ENCODE measurements at regions of chr12 and their contacts with region 1.

Region 1: DNA sequence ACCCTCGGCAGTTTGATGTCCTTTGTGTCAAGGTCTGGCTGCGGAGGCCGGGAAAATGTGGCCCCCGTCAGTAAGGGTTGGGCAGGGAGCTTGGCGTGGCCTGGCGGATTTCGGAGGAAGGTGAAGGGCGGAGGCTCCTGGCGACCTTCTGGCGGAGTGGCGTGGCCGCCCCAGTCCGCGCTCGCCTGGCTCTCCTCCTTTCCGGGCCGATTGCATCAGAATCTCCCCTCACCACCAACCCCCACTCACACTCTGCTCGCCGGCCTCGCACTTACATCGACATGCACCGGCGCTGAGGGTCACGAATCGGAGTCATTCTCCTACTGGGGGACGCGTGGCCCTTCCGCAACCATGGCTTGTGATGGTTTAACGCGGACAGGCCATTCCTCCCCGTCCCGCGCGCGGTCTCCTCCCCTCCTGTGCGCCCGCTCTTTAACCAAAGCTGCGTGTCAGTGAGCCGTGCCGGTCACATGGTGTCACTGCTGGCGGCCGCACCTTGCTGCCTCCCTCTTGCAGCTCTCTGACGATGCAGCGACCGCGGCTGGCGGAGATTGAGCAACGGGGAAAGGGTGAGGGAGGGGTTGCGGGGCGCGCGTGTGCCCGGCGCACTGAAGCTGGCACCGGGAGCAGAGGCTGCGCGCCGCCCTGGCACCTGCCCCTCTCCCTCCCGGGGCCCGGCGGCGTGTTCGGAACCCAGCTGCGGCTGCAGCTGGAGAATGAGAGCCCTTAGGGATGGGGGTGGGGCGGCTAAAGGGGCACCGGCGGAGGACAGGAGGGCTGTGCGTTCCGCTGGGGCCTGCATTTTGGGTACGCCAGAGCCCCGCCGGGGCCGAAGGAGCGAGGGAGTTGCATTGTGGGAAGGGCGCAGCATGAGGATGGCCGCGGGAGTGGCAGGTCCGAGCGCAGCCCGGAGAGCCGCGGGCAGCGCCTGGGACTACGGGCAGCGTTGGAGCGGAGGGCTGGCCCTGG is at the start of gene SLC38A1:
- DNase-seq: peak; percentile 94
- ATAC-seq: peak; percentile 72
- H3K4me3 Mint-ChIP-seq: no peak within 1 kb of the TSS
- H3K27ac Mint-ChIP-seq: no peak within 1 kb of the TSS
- H3K4me1 Mint-ChIP-seq: peaks cover 21% of the 10 kb centered on the region
- H3K27me3 Mint-ChIP-seq: no peaks in the 10 kb centered on the region
- total RNA-seq, gene SLC38A1: 149 to 180 TPM

Region 2: GRCh38 chr12:46209914-46210872 is 58.7 kb before region 1 on chr12:
- CTCF ChIA-PET with region 1: interaction called, 34 read pairs
- DNase-seq: peak; percentile 58
- ATAC-seq: peak; percentile 21
- H3K4me3 Mint-ChIP-seq: peak overlapping the region; percentile 16
- H3K27ac Mint-ChIP-seq: peak overlapping the region; percentile 76
- H3K4me1 Mint-ChIP-seq: peaks cover 63% of the 10 kb centered on the region
- H3K27me3 Mint-ChIP-seq: no peaks in the 10 kb centered on the region

Region 3: DNA sequence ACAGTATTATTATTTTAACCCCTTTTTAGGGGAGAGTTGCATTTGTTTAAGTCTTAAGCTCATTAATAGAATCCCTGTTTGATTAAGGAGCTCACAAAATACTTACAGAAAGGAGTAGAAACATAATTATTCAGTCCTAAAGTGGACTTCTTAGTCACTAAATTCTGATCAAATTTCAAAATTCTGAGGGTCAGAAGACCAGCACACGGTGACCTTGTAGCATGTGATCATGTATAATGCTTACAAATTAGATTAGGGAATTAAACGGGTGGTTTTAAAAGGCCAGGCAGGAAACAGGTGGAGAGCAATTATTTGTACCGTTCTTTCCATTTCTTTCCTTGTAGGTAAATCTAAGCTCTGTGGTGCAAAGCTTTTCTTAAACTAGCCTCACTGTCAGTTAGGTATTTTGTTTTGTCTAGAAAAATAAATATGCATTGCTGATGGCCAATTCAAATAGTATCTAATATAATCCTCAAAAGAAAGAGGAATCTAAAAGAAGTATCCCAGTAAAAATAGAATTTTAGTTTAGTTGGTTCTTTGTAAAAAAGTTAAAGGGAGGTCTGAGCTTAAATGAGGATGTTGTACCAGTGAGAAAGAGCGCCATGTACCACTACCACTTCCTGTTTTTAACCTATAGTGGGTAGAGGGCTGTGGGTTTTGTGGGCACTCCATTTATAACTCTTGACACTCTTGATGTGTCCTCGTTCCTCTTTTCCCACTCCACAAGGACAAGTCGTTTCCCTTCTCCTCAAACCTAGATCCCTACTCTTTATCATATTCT is 51.1 kb before region 1 on chr12:
- CTCF ChIA-PET with region 1: interaction called, 34 read pairs
- DNase-seq: peak; percentile 86
- ATAC-seq: no peak
- H3K4me3 Mint-ChIP-seq: peak overlapping the region; percentile 65
- H3K27ac Mint-ChIP-seq: peak overlapping the region; percentile 94
- H3K4me1 Mint-ChIP-seq: peaks cover 95% of the 10 kb centered on the region
- H3K27me3 Mint-ChIP-seq: no peaks in the 10 kb centered on the region